OCI-LY7 (cell line): ENCODE measurements at regions of chr10 and their contacts with region 1.

Region 1: DNA sequence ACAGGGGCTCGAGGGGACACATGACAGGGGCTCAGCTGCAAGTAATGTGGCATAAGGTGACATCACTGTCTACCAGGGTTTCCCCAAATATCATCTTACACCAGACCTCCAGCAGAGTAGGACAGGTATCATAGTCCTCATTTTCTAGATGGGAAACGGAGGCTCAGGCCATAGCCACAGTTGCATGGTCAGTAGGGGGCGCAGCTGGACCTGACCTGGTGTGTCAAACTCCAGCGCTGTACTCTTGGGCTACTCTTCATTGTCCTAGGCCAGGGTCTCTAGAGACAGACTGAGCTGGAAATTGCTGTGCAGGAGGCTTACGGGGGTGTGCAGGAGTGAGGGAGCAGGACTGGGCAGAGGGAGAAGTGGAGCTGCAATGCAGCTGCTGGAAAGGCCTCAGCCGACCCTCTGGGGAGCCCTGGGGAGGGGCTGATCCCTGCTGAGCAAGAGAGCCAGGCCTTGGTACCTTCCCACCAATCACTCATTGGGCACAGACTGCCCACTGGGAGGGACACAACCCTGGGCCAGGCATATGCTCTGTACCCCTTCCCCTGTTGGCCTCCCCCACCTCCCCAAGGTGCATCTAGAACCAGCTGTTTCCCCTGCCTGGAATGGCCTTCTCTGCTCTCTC is 89.9 kb downstream of the CDH23 start:
- DNase-seq: peak; percentile 42
- H3K4me3 ChIP-seq: no peak overlapping the region
- H3K27ac ChIP-seq: no peak overlapping the region
- H3K4me1 ChIP-seq: no peaks in the 10 kb centered on the region
- CTCF ChIP-seq: peak; percentile 76

Region 2: GRCh38 chr10:71561003-71561574 is 74.5 kb after region 1 on chr10:
- CTCF ChIA-PET with region 1: no interaction called
- POLR2A ChIA-PET with region 1: no interaction called
- intact Hi-C with region 1: no loop called
- DNase-seq: no peak
- H3K4me3 ChIP-seq: no peak overlapping the region
- H3K27ac ChIP-seq: no peak overlapping the region
- H3K4me1 ChIP-seq: no peaks in the 10 kb centered on the region
- CTCF ChIP-seq: no peak

Region 3: DNA sequence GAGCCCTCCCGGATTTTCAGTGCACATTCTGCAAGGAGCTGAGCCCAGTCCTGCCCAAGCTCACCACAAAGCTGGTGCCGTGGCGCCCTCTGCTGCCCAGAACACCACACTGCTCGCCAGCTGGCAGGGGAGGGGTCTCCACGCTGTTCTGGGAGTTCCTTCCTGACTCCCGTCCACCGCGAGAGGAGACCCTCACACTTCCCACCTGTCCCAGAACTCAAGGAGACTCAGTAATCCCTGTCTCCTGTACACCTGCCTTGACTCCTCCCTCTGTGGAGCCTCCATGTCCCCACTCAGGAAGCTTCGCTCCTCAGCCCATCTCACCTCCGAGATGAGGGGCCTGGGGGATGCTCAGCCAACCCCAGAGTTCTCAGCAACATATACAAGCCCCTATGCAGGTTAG is 221.7 kb after region 1 on chr10:
- CTCF ChIA-PET with region 1: interaction called, 3 read pairs
- POLR2A ChIA-PET with region 1: no interaction called
- intact Hi-C with region 1: loop called (anchors 2 kb)
- DNase-seq: peak; percentile 73
- H3K4me3 ChIP-seq: no peak overlapping the region
- H3K27ac ChIP-seq: no peak overlapping the region
- H3K4me1 ChIP-seq: peaks cover 13% of the 10 kb centered on the region
- CTCF ChIP-seq: peak; percentile 98